Lower lobe of right lung (tissue), 2 donors: ENCODE measurements at regions of chr6 and their contacts with region 1.

Region 1: DNA sequence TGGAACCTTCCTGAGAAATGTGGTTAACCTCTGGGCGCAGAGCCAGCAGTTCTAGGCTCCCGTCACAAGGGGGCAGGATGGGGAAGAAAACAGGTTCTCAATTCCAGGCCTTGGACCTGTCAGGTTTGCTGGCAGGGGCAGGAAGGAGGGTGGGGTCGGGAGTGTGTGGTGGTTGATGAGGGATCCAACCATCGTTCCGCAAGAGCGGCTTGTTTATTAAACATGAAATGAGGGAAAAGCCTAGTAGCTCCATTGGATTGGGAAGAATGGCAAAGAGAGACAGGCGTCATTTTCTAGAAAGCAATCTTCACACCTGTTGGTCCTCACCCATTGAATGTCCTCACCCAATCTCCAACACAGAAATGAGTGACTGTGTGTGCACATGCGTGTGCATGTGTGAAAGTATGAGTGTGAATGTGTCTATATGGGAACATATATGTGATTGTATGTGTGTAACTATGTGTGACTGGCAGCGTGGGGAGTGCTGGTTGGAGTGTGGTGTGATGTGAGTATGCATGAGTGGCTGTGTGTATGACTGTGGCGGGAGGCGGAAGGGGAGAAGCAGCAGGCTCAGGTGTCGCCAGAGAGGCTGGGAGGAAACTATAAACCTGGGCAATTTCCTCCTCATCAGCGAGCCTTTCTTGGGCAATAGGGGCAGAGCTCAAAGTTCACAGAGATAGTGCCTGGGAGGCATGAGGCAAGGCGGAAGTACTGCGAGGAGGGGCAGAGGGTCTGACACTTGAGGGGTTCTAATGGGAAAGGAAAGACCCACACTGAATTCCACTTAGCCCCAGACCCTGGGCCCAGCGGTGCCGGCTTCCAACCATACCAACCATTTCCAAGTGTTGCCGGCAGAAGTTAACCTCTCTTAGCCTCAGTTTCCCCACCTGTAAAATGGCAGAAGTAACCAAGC is 29.6 kb downstream of the SRSF3 start:
- DNase-seq: peak; percentile 85
- ATAC-seq: peak; percentile 75 to 79
- H3K4me3 ChIP-seq: no peak overlapping the region
- H3K27ac ChIP-seq: no peak overlapping the region
- H3K4me1 ChIP-seq: peaks cover 55% of the 10 kb centered on the region
- H3K27me3 ChIP-seq: no peaks in the 10 kb centered on the region
- CTCF ChIP-seq: peak; percentile 89

Region 2: GRCh38 chr6:36414481-36414880 is 209.3 kb before region 1 on chr6:
- intact Hi-C with region 1: no loop called
- DNase-seq: no peak
- ATAC-seq: peak in 1 of 2 donors; percentile 12
- H3K4me3 ChIP-seq: no peak overlapping the region
- H3K27ac ChIP-seq: no peak overlapping the region
- H3K4me1 ChIP-seq: no peaks in the 10 kb centered on the region
- H3K27me3 ChIP-seq: no peaks in the 10 kb centered on the region
- CTCF ChIP-seq: no peak

Region 3: DNA sequence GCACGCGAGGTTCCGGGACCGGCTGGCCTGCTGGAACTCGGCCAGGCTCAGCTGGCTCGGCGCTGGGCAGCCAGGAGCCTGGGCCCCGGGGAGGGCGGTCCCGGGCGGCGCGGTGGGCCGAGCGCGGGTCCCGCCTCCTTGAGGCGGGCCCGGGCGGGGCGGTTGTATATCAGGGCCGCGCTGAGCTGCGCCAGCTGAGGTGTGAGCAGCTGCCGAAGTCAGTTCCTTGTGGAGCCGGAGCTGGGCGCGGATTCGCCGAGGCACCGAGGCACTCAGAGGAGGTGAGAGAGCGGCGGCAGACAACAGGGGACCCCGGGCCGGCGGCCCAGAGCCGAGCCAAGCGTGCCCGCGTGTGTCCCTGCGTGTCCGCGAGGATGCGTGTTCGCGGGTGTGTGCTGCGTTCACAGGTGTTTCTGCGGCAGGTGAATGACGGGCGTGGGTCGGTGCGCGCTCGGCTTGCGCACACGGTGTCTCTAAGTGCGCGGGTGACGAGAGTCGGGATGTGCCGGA is 54.8 kb after region 1 on chr6 and contains the start of gene CDKN1A:
- intact Hi-C with region 1: loop called (anchors 10 kb)
- DNase-seq: peak; percentile 94
- ATAC-seq: peak; percentile 87 to 92
- H3K4me3 ChIP-seq: peak within 1 kb of the TSS; percentile 78
- H3K27ac ChIP-seq: peak within 1 kb of the TSS; percentile 96
- H3K4me1 ChIP-seq: peaks cover 53% of the 10 kb centered on the region
- H3K27me3 ChIP-seq: no peaks in the 10 kb centered on the region
- CTCF ChIP-seq: no peak
- total RNA-seq, gene CDKN1A: 71.0 TPM

Region 4: GRCh38 chr6:36759148-36759759 is 135.5 kb after region 1 on chr6:
- intact Hi-C with region 1: loop called (anchors 10 kb)
- DNase-seq: peak; percentile 89
- ATAC-seq: peak; percentile 92 to 93
- H3K4me3 ChIP-seq: no peak overlapping the region
- H3K27ac ChIP-seq: no peak overlapping the region
- H3K4me1 ChIP-seq: peaks cover 28% of the 10 kb centered on the region
- H3K27me3 ChIP-seq: no peaks in the 10 kb centered on the region
- CTCF ChIP-seq: peak; percentile 96

Region 5: GRCh38 chr6:36788768-36789167 is 165.0 kb after region 1 on chr6:
- intact Hi-C with region 1: no loop called
- DNase-seq: no peak
- ATAC-seq: no peak
- H3K4me3 ChIP-seq: no peak overlapping the region
- H3K27ac ChIP-seq: no peak overlapping the region
- H3K4me1 ChIP-seq: no peaks in the 10 kb centered on the region
- H3K27me3 ChIP-seq: no peaks in the 10 kb centered on the region
- CTCF ChIP-seq: no peak